ENCODE measurements at regions of chr2 and their contacts with region 1.

Region 1: DNA sequence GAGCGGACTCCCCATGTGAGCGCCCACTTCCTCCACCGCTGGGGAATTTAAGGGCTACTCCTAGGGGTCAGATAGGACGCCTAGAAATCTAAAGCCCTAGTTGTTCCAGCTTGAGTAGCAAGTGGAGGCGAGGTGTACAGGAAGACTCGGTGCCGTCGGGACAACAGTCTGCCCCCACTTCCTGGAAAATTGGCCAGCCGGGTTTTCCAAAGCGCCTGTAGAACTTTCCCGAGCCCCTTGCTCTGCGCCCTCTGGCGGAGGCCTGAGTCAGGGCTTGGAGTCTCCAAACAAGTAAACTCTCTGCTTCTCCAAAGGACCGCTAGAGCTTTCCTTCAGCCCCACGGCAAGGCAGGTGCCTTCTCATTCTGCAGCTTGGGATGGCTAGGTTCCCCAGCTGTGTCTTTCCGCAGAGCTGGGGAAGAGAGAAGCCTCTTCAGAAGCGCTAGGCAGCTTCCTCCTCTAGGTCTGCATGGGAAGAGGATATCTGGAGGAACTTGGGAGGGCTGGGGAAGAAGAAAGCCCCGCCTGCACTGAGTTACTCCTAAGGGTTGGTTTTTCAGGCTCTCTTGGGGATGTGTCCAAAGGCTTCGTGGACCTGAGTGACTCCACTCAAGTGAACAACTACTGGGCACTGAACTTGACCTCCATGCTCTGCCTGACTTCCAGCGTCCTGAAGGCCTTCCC is 688 bp downstream of the SPR start:
- ATAC-seq: peak; percentile 51 to 77 (median 72)
- H3K4me3 ChIP-seq: peak overlapping the region; percentile 32 to 45 (median 39)
- H3K27ac ChIP-seq: no peak overlapping the region
- H3K4me1 ChIP-seq: peaks cover 0 to 4% of the 10 kb centered on the region in 2 donors

Region 2: DNA sequence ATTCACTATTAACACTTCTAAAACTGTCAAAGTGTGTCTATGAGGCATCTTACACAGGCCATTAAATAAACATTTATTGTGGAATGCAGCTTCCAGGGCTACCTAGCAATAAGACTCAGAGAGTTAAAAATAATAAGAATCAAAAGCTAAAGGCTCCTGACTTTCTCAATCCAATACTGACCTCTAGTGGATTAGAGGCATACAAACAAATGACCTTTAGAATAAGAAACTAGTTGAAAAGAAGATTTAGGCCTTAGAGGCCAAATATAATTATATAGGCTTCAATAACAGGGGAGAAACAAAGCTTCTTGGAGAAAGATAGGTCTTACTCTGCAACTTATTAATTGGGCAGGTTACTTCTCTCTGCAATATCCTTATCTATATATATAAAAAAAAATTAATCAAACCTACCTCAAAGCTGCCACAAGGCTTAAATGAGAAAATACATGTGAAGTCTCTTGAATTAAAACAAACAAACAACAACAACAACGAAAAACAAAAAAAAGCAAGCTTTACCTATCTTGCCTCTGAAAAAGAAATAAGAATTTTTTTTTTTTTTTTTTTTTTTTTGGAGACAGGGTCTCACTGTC is 308.2 kb before region 1 on chr2:
- in situ Hi-C with region 1: no loop called
- ATAC-seq: peak in 4 of 8 experiments; percentile 35 to 66 (median 54)
- H3K4me3 ChIP-seq: no peak overlapping the region
- H3K27ac ChIP-seq: no peak overlapping the region
- H3K4me1 ChIP-seq: no peaks in the 10 kb centered on the region

Region 3: GRCh38 chr2:73187549-73187948 is 299.7 kb after region 1 on chr2:
- in situ Hi-C with region 1: loop called in 3 of 9 experiments (anchors 10 to 25 kb)
- ATAC-seq: no peak
- H3K4me3 ChIP-seq: no peak overlapping the region
- H3K27ac ChIP-seq: no peak overlapping the region
- H3K4me1 ChIP-seq: no peaks in the 10 kb centered on the region